Ascending aorta (tissue), 2 donors: ENCODE measurements at regions of chr15 and their contacts with region 1.

Region 1: GRCh38 chr15:34241372-34242330 is 16.8 kb downstream of the EMC4 start:
- DNase-seq: no peak
- H3K4me3 ChIP-seq: no peak overlapping the region
- H3K27ac ChIP-seq: no peak overlapping the region
- H3K4me1 ChIP-seq: no peaks in the 10 kb centered on the region
- H3K27me3 ChIP-seq: no peaks in the 10 kb centered on the region
- CTCF ChIP-seq: peak; percentile 55 to 75 (median 74)

Region 2: GRCh38 chr15:34342737-34343575 is 101.3 kb after region 1 on chr15 and contains the starts of genes NOP10 and NUTM1:
- intact Hi-C with region 1: loop called (anchors 1 kb)
- DNase-seq: peak; percentile 63 to 95
- H3K4me3 ChIP-seq: peak within 1 kb of the TSS; percentile 67 to 77
- H3K27ac ChIP-seq: peak within 1 kb of the TSS; percentile 71 to 87
- H3K4me1 ChIP-seq: peaks cover 7 to 13% of the 10 kb centered on the region in 2 donors
- H3K27me3 ChIP-seq: no peaks in the 10 kb centered on the region
- CTCF ChIP-seq: peak; percentile 93 to 96 (median 95)
- total RNA-seq, gene NOP10: 212 TPM
- total RNA-seq, gene NUTM1: not detected